Cardiac septum (tissue), 1 donor: ENCODE measurements at regions of chr9 and their contacts with region 1.

Region 1: GRCh38 chr9:88578121-88579054 is 43.4 kb downstream of the NXNL2 start:
- DNase-seq: peak; percentile 93

Region 2: GRCh38 chr9:87684627-87685219 is 893.7 kb before region 1 on chr9:
- intact Hi-C with region 1: loop called (anchors 5 kb)
- DNase-seq: no peak

Region 3: GRCh38 chr9:88106491-88106890 is 471.9 kb before region 1 on chr9:
- intact Hi-C with region 1: loop called (anchors 5 kb)
- DNase-seq: no peak

Region 4: GRCh38 chr9:88173378-88173999 is 404.9 kb before region 1 on chr9:
- intact Hi-C with region 1: loop called (anchors 2 kb)
- DNase-seq: no peak

Region 5: DNA sequence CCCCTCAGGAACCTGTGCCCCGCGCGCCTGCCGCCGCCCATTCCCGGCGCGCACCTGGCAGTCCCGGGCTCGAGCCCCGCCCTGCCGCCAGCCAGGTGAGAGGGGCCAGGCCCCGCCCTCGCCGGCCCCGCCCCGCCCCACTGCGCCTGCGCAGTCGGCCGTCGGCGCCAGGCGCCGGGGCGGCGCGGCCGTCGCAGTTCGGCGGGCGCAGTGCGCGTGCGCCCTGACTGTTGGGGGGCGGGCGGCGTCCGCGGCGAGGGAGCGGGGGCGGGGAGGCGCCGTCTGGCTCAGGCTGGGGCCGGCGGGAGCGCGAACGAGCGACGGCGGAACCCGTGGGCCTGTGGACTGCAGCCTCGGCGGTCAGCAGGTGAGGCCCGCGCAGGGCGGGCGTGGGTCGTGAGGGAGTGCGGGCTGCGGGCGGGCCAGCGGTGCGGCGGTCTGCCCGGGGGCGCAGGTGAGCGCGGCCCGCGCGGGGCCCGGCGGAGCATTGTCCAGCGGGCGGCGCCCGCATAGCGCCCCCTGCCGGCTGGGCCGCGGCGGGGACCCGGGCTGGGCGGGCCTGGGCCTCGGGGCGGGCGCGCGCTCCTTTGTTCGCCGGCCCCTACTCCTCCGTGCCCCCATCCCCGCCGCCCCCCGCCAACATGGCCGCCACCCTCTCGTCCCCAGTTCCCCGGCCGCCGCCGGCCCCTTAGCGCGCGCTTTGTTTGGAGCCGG is 190.1 kb before region 1 on chr9 and contains the start of gene SPIN1:
- intact Hi-C with region 1: loop called (anchors 5 kb)
- DNase-seq: peak; percentile 91
- total RNA-seq, gene SPIN1: 49.2 TPM

Region 6: DNA sequence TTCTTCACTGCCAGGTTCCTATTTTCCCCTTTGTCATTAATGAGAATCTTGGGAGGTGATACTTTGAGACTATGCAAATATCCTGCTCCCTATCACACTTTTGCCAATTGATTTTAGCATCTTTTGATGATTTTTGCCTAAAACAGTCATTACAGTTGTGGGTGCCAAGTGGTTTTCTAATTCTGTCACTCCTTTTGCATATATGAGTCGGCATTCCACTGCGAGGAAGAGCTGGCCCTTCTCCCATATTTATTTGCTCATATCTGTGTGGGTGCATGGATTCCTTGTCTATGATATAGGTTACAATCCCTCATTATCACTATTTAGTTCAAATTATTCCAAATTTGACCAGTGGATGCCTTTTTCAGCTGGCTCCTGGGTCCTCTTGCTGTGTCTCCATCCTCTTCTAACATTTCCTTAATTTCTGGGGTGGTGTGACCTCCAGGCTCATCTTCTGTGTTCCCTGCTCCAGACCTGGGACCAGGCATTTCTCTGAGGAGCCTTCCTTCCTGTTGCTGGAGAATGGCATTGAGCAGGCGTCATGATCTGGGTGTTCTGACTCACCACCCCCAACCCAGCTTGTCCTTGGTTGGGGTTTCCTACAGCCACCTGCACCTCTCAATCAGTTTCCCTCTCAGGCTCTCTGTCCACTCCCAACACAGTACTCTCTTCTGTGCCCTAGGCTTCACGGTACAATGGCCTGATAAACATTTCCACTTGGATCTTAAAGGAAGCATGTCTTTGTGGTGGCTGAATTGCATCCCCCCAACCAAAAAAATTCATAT is 63.3 kb after region 1 on chr9:
- intact Hi-C with region 1: no loop called
- DNase-seq: no peak